ENCODE measurements at regions of chr10 and their contacts with region 1.

Region 1: GRCh38 chr10:60944159-60944909 is at the start of gene RHOBTB1:
- DNase-seq: peak; percentile 85
- H3K4me3 ChIP-seq: peak within 1 kb of the TSS; percentile 74 to 91 (median 86)
- H3K27ac ChIP-seq: peak within 1 kb of the TSS; percentile 98
- H3K4me1 ChIP-seq: peaks cover 18% of the 10 kb centered on the region
- H3K27me3 ChIP-seq: no peaks in the 10 kb centered on the region
- CTCF ChIP-seq: no peak
- POLR2A ChIP-seq: peak; percentile 71
- total RNA-seq, gene RHOBTB1: 31.0 and 31.3 TPM in 2 replicates

Region 2: GRCh38 chr10:60853107-60853506 is 91.2 kb before region 1 on chr10:
- CTCF ChIA-PET with region 1: no interaction called
- POLR2A ChIA-PET with region 1: no interaction called
- dilution Hi-C with region 1: no loop called
- intact Hi-C with region 1: no loop called
- DNase-seq: no peak
- H3K4me3 ChIP-seq: no peak overlapping the region
- H3K27ac ChIP-seq: no peak overlapping the region
- H3K4me1 ChIP-seq: no peaks in the 10 kb centered on the region
- H3K27me3 ChIP-seq: no peaks in the 10 kb centered on the region
- CTCF ChIP-seq: no peak
- POLR2A ChIP-seq: no peak

Region 3: DNA sequence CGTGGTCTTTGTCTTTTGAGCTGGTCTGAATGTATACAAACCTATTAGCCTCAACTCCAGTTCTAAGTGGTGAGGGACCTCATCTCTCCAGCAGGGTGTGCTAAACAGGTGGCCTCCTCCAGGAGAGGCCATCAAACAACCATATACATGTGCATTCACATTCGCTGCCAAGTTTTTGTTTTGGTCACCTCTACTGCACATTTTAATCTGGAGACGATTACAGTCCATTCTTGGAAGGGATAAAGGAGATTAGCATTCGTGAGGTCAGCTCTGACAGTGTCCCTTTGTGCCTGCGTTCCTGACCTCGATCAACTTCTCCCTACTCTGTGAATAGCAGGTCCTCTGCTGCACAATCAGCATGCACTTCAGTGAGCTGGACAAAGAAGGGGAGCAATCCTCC is 61.1 kb before region 1 on chr10:
- CTCF ChIA-PET with region 1: interaction called, 6 read pairs
- POLR2A ChIA-PET with region 1: no interaction called
- dilution Hi-C with region 1: no loop called
- intact Hi-C with region 1: loop called (anchors 5 kb)
- DNase-seq: peak; percentile 61
- H3K4me3 ChIP-seq: no peak overlapping the region
- H3K27ac ChIP-seq: no peak overlapping the region
- H3K4me1 ChIP-seq: no peaks in the 10 kb centered on the region
- H3K27me3 ChIP-seq: no peaks in the 10 kb centered on the region
- CTCF ChIP-seq: peak; percentile 41 to 64
- POLR2A ChIP-seq: no peak

Region 4: DNA sequence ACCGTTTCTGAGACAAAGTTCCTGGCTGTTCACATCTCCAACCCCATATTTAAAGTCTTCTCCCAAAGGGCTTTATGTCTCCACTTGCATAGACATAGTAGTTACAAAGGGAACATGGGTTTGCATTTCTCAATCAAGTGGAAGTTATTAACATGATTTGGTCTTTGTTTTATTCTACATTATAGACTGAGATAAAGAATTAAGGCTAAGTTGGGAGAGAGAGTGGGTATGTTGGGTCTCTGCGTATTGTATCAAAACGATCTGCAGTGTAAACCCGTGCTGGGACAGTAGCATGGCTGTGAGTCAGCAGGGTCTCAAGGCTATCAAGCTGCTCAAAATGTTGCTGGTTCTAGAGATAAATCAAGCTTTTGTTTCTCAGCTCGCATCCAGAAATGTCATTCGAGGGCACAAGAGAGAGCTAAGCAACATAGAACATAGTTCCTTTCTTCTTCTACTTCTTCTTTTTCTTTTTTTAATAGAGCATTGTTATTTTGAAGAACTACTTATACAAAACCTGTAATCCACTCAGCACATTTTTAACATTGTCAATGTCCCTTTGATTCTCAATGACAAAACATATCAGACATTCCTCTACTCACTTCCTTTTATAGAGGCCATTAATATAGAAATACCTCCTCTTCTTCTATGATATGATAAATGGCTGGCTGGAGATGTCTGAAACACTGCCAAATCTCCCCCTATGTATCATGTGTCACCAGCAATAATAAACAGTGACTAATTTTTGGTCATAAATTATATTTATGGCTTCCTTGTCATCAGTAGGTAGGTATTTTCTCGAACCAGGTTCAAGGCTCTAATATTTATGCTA is 34.2 kb after region 1 on chr10:
- CTCF ChIA-PET with region 1: no interaction called
- POLR2A ChIA-PET with region 1: interaction called, 4 read pairs
- dilution Hi-C with region 1: no loop called
- intact Hi-C with region 1: loop called (anchors 1 kb)
- DNase-seq: peak; percentile 94
- H3K4me3 ChIP-seq: no peak overlapping the region
- H3K27ac ChIP-seq: peak overlapping the region; percentile 89
- H3K4me1 ChIP-seq: peaks cover 41% of the 10 kb centered on the region
- H3K27me3 ChIP-seq: no peaks in the 10 kb centered on the region
- CTCF ChIP-seq: no peak
- POLR2A ChIP-seq: no peak